Caco-2 (cell line): ENCODE measurements at regions of chr1 and their contacts with region 1.

Region 1: GRCh38 chr1:85307987-85308832 is 31.8 kb upstream of the BCL10 start:
- DNase-seq: peak; percentile 79 to 87
- H3K4me3 ChIP-seq: no peak overlapping the region
- H3K4me3 Mint-ChIP-seq: peak overlapping the region; percentile 57
- H3K27ac Mint-ChIP-seq: no peak overlapping the region
- H3K4me1 ChIP-seq: peaks cover 16% of the 10 kb centered on the region
- H3K4me1 Mint-ChIP-seq: no peaks in the 10 kb centered on the region
- H3K27me3 ChIP-seq: no peaks in the 10 kb centered on the region
- H3K27me3 Mint-ChIP-seq: no peaks in the 10 kb centered on the region
- CTCF ChIP-seq: peak; percentile 81 to 89

Region 2: DNA sequence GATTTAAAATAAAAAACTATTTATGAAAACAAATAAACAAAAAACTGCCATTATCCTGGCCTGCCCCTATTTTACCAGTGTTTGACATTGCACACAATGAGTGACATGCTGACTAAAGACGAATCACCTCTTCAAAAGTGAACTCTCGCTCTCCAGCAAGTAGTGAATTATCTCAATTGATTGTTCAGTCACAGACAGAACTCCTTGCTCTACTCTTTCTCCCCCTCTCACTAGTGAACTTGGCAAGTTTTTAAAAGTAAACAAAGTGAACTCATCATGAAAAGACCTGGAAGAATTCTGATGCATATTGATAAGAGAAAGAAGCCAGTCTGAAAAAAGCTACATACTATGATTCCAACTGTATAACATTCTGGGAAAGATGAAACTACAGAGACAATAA is 44.1 kb before region 1 on chr1:
- CTCF ChIA-PET with region 1: no interaction called
- POLR2A ChIA-PET with region 1: no interaction called
- intact Hi-C with region 1: no loop called
- DNase-seq: no peak
- H3K4me3 ChIP-seq: no peak overlapping the region
- H3K4me3 Mint-ChIP-seq: no peak overlapping the region
- H3K27ac Mint-ChIP-seq: no peak overlapping the region
- H3K4me1 ChIP-seq: peaks cover 4% of the 10 kb centered on the region; the same call in 1 of the 2 replicates
- H3K4me1 Mint-ChIP-seq: peaks cover 13% of the 10 kb centered on the region
- H3K27me3 ChIP-seq: no peaks in the 10 kb centered on the region
- H3K27me3 Mint-ChIP-seq: no peaks in the 10 kb centered on the region
- CTCF ChIP-seq: no peak

Region 3: GRCh38 chr1:85328713-85329376 is 20.6 kb after region 1 on chr1:
- CTCF ChIA-PET with region 1: no interaction called
- POLR2A ChIA-PET with region 1: no interaction called
- intact Hi-C with region 1: loop called (anchors 2 kb)
- DNase-seq: peak; percentile 70 to 74
- H3K4me3 ChIP-seq: no peak overlapping the region
- H3K4me3 Mint-ChIP-seq: peak overlapping the region; percentile 31
- H3K27ac Mint-ChIP-seq: peak overlapping the region; percentile 89
- H3K4me1 ChIP-seq: peaks cover 58% of the 10 kb centered on the region
- H3K4me1 Mint-ChIP-seq: peaks cover 33% of the 10 kb centered on the region
- H3K27me3 ChIP-seq: no peaks in the 10 kb centered on the region
- H3K27me3 Mint-ChIP-seq: no peaks in the 10 kb centered on the region
- CTCF ChIP-seq: no peak

Region 4: GRCh38 chr1:85398391-85399064 is 90.3 kb after region 1 on chr1:
- CTCF ChIA-PET with region 1: no interaction called
- POLR2A ChIA-PET with region 1: no interaction called
- intact Hi-C with region 1: loop called (anchors 1 kb)
- DNase-seq: no peak
- H3K4me3 ChIP-seq: no peak overlapping the region
- H3K4me3 Mint-ChIP-seq: no peak overlapping the region
- H3K27ac Mint-ChIP-seq: no peak overlapping the region
- H3K4me1 ChIP-seq: 0 out of 2 replicates have a peak, but pooled peaks cover 7% of the 10 kb centered on the region
- H3K4me1 Mint-ChIP-seq: no peaks in the 10 kb centered on the region
- H3K27me3 ChIP-seq: no peaks in the 10 kb centered on the region
- H3K27me3 Mint-ChIP-seq: no peaks in the 10 kb centered on the region
- CTCF ChIP-seq: no peak

Region 5: GRCh38 chr1:85502625-85503083 is 194.4 kb after region 1 on chr1:
- CTCF ChIA-PET with region 1: interaction called, 3 read pairs
- POLR2A ChIA-PET with region 1: no interaction called
- intact Hi-C with region 1: loop called (anchors 1 kb)
- DNase-seq: peak; percentile 51 to 57
- H3K4me3 ChIP-seq: no peak overlapping the region
- H3K4me3 Mint-ChIP-seq: peak overlapping the region; percentile 48
- H3K27ac Mint-ChIP-seq: peak overlapping the region; percentile 91
- H3K4me1 ChIP-seq: peaks cover 15% of the 10 kb centered on the region
- H3K4me1 Mint-ChIP-seq: peaks cover 14% of the 10 kb centered on the region
- H3K27me3 ChIP-seq: no peaks in the 10 kb centered on the region
- H3K27me3 Mint-ChIP-seq: no peaks in the 10 kb centered on the region
- CTCF ChIP-seq: peak in 1 of 2 experiments; percentile 54

Region 6: GRCh38 chr1:85628791-85629531 is 320.8 kb after region 1 on chr1:
- CTCF ChIA-PET with region 1: no interaction called
- POLR2A ChIA-PET with region 1: no interaction called
- intact Hi-C with region 1: loop called (anchors 1 kb)
- DNase-seq: no peak
- H3K4me3 ChIP-seq: no peak overlapping the region
- H3K4me3 Mint-ChIP-seq: no peak overlapping the region
- H3K27ac Mint-ChIP-seq: no peak overlapping the region
- H3K4me1 ChIP-seq: no peaks in the 10 kb centered on the region
- H3K4me1 Mint-ChIP-seq: peaks cover 10% of the 10 kb centered on the region
- H3K27me3 ChIP-seq: no peaks in the 10 kb centered on the region
- H3K27me3 Mint-ChIP-seq: no peaks in the 10 kb centered on the region
- CTCF ChIP-seq: no peak

Region 7: GRCh38 chr1:85707990-85708828 is 400.0 kb after region 1 on chr1 and contains the start of gene ZNHIT6:
- CTCF ChIA-PET with region 1: no interaction called
- POLR2A ChIA-PET with region 1: no interaction called
- intact Hi-C with region 1: loop called (anchors 5 kb)
- DNase-seq: peak; percentile 91 to 96
- H3K4me3 ChIP-seq: peak within 1 kb of the TSS; percentile 82
- H3K4me3 Mint-ChIP-seq: no peak within 1 kb of the TSS
- H3K27ac Mint-ChIP-seq: no peak within 1 kb of the TSS
- H3K4me1 ChIP-seq: no peaks in the 10 kb centered on the region
- H3K4me1 Mint-ChIP-seq: no peaks in the 10 kb centered on the region
- H3K27me3 ChIP-seq: no peaks in the 10 kb centered on the region
- H3K27me3 Mint-ChIP-seq: no peaks in the 10 kb centered on the region
- CTCF ChIP-seq: peak; percentile 39 to 50
- total RNA-seq, gene ZNHIT6: 13.9 and 16.1 TPM in 2 replicates